H1 (cell line): ENCODE measurements at regions of chr18 and their contacts with region 1.

Region 1: GRCh38 chr18:49510393-49511115 is 23.5 kb upstream of the C18orf32 start:
- DNase-seq: peak in 1 of 2 experiments; percentile 71
- H3K4me3 ChIP-seq: no peak overlapping the region
- H3K27ac ChIP-seq: no peak overlapping the region
- H3K4me1 ChIP-seq: peaks cover 0 to 2% (median 0%) of the 10 kb centered on the region in 4 experiments; a peak in 1 of 7 replicates
- H3K27me3 ChIP-seq: no peaks in the 10 kb centered on the region
- CTCF ChIP-seq: peak; percentile 79 to 91 (median 79)
- EP300 ChIP-seq: no peak
- POLR2A ChIP-seq: no peak
- RAD21 ChIP-seq: peak; percentile 95 to 97

Region 2: DNA sequence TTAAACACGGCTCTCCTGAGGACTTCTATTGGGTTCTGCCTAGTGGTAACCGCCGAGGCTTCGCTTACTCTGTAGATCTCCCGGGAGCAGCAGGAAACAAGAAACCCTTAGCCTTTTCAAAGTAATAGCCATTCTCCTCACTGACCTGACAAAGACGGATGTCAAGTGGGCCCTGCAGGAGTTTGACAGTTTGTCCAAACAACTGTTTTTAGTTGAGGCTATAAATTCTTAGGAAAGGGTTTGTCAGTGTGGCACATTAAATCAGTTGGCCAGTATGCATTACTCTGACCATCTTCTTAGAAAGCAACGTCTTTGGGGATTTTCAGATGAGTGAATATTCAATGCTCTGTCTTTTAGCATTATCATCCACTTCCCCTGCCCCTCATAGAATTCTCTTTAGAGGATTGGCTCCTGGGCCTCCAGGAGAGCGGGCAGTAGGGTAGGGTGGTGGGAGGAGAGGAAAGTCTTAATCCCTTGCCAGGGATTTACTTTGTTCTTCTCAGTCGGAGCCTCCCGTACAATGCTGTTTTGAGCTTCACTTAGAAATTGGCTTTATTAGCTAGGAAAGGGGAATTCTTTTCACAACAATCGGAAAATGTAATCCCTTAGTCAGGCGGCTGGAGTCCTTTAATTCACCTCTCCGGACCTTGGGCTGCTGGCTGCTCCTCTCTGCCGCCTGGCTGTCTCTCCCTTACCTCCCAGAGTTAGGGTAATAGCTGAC is 10.2 kb before region 1 on chr18:
- CTCF ChIA-PET with region 1: interaction called, 13 read pairs
- POLR2A ChIA-PET with region 1: no interaction called
- DNase-seq: no peak
- H3K4me3 ChIP-seq: peak overlapping the region in 1 of 4 experiments; percentile 29; a peak in 2 of 8 replicates
- H3K27ac ChIP-seq: no peak overlapping the region
- H3K4me1 ChIP-seq: peaks cover 2 to 9% (median 9%) of the 10 kb centered on the region in 4 experiments; a peak in 3 of 7 replicates
- H3K27me3 ChIP-seq: no peaks in the 10 kb centered on the region
- CTCF ChIP-seq: peak in 2 of 3 experiments; percentile 12 to 25; a peak in 3 of 4 replicates
- EP300 ChIP-seq: peak in 1 of 2 experiments; percentile 41; a peak in 1 of 3 replicates
- POLR2A ChIP-seq: no peak
- RAD21 ChIP-seq: no peak; a peak in 1 of 4 replicates

Region 3: DNA sequence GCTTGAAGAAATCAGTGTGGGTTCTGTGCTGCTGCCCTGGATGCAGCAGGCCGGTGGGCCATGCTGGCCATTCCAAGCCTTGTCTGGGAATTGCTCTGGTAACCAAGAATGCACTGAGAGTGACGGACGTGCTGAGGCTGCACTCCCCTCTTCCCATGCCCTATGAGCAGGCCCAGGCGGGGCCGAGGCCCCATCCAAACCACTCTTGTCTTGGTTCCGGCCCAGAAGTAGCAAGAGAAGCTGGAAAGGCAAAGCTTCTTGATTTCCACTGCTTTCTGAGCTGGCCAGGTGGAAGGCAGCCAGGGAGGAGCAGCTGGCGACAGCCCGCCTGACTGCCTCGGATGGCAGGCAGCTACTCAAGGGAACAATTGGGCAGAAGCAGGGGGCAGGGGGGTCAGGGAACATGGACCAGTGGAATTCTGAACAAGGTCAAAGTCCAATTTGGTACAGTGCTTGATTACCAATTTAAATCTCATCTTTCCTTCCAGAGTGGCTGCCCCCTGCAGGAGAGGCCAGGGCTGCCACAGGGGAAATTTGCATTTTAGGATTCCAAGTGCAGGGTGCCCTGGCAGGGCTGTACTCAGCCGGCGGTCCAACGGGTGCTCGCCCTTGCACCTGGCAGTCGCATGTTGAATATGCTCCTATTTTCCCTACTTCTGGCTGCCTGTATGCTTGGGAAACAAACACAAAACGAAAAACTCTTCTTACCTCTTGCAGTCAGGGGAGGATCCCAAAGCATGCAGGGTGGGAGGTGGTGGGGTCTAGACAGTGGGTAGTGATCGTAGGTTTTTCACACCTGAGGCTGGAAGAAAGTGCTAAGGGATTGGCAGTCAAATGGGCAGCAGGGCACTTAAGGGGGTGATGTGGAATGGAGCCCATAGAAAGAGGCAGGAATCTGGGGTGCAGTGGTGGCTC is 118.6 kb after region 1 on chr18:
- CTCF ChIA-PET with region 1: interaction called, 11 read pairs
- POLR2A ChIA-PET with region 1: no interaction called
- DNase-seq: no peak
- H3K4me3 ChIP-seq: no peak overlapping the region
- H3K27ac ChIP-seq: no peak overlapping the region
- H3K4me1 ChIP-seq: peaks cover 0 to 5% (median 0%) of the 10 kb centered on the region in 4 experiments; a peak in 3 of 7 replicates
- H3K27me3 ChIP-seq: no peaks in the 10 kb centered on the region
- CTCF ChIP-seq: peak; percentile 35 to 53 (median 42)
- EP300 ChIP-seq: no peak
- POLR2A ChIP-seq: no peak
- RAD21 ChIP-seq: peak; percentile 24 to 27; a peak in 2 of 4 replicates

Region 4: DNA sequence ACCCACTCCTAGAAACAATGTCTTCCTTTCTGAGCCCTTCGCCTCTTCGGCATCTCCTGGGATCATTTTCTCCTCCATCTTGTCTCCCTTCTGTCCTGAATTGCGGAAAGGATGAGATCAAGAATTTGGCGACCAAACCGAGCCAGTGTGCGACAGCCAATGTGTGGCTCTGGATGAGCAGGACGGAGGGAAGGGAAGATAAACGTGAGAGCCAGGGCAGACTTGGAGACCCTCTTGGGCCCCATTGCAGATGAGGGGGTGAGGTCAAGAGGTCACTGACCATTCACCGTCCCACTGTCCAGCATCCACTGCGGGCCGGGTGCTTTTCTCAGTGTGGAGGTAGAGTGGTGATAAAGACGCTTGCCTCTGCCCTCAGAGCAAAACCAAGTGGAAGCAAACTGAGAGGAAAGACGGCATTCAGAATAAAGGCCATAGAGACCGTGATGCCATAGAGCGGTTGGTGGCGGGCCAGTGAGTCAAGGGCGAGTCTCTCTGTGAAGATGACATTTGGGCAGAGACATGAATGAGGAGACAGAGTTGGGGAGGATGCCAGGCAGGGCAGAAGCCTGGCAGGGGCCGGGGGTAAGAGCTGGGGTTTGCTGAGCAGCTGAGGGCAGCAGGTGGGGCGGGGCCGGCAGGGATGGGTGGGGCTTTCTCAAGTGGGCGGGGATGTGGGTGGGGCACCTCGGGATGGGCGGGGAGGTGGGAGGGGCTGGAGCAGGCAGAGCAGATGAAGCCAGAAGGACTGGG is 247.1 kb after region 1 on chr18:
- CTCF ChIA-PET with region 1: interaction called, 14 read pairs
- POLR2A ChIA-PET with region 1: no interaction called
- DNase-seq: peak in 1 of 2 experiments; percentile 63
- H3K4me3 ChIP-seq: no peak overlapping the region
- H3K27ac ChIP-seq: no peak overlapping the region
- H3K4me1 ChIP-seq: peaks cover 0 to 14% (median 2%) of the 10 kb centered on the region in 4 experiments; a peak in 4 of 7 replicates
- H3K27me3 ChIP-seq: no peaks in the 10 kb centered on the region
- CTCF ChIP-seq: no peak
- EP300 ChIP-seq: no peak
- POLR2A ChIP-seq: no peak
- RAD21 ChIP-seq: no peak

Region 5: DNA sequence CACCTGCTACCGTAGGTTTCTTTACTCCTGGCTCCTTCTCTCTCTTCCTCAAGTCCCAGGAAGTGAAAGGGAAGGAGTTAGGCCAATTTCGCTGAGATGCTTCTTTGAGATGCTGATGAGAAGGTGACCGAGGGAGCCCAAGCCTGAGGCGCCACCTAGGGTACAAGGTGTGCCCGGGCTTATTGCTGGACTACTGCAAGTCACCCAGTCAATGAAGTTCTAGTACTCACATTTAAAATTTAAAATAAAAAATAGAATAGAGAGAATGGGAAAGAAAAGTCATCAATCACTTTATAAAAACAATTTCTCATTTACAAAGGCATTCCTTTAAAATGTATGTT is 257.5 kb after region 1 on chr18:
- CTCF ChIA-PET with region 1: interaction called, 45 read pairs
- POLR2A ChIA-PET with region 1: no interaction called
- DNase-seq: peak; percentile 69 to 74
- H3K4me3 ChIP-seq: no peak overlapping the region
- H3K27ac ChIP-seq: no peak overlapping the region
- H3K4me1 ChIP-seq: peaks cover 0 to 6% (median 3%) of the 10 kb centered on the region in 4 experiments; a peak in 4 of 7 replicates
- H3K27me3 ChIP-seq: no peaks in the 10 kb centered on the region
- CTCF ChIP-seq: peak; percentile 85 to 88 (median 88)
- EP300 ChIP-seq: no peak
- POLR2A ChIP-seq: no peak
- RAD21 ChIP-seq: peak; percentile 97